ENCODE measurements at regions of chr19 and their contacts with region 1.

Region 1: GRCh38 chr19:7478173-7478842 is 10.5 kb downstream of the PEX11G start:
- DNase-seq: no peak
- ATAC-seq: no peak
- H3K4me3 Mint-ChIP-seq: no peak overlapping the region
- H3K27ac Mint-ChIP-seq: no peak overlapping the region
- H3K4me1 Mint-ChIP-seq: peaks cover 4% of the 10 kb centered on the region
- H3K27me3 Mint-ChIP-seq: no peaks in the 10 kb centered on the region

Region 2: GRCh38 chr19:6963937-6964336 is 514.4 kb before region 1 on chr19:
- CTCF ChIA-PET with region 1: no interaction called
- POLR2A ChIA-PET with region 1: no interaction called
- intact Hi-C with region 1: no loop called
- DNase-seq: peak; percentile 68
- ATAC-seq: no peak
- H3K4me3 Mint-ChIP-seq: no peak overlapping the region
- H3K27ac Mint-ChIP-seq: no peak overlapping the region
- H3K4me1 Mint-ChIP-seq: peaks cover 2% of the 10 kb centered on the region
- H3K27me3 Mint-ChIP-seq: no peaks in the 10 kb centered on the region

Region 3: GRCh38 chr19:7674010-7675005 is 196.0 kb after region 1 on chr19:
- CTCF ChIA-PET with region 1: no interaction called
- POLR2A ChIA-PET with region 1: interaction called, 14 read pairs
- intact Hi-C with region 1: no loop called
- DNase-seq: peak; percentile 63
- ATAC-seq: peak; percentile 51
- H3K4me3 Mint-ChIP-seq: no peak overlapping the region
- H3K27ac Mint-ChIP-seq: no peak overlapping the region
- H3K4me1 Mint-ChIP-seq: peaks cover 43% of the 10 kb centered on the region
- H3K27me3 Mint-ChIP-seq: peaks cover 42% of the 10 kb centered on the region

Measured in activated CD4-positive, alpha-beta T cell treated with anti-CD3 and anti-CD28 coated beads for 36 hours (primary cell).